ENCODE measurements at regions of chr1 and their contacts with region 1.

Region 1: GRCh38 chr1:231866392-231867331 is 240.1 kb downstream of the DISC1 start:
- DNase-seq: peak; percentile 39 to 66 (median 41)
- H3K4me3 ChIP-seq: no peak overlapping the region
- H3K4me3 Mint-ChIP-seq: peak overlapping the region in 2 of 7 donors; percentile 29 to 70
- H3K27ac ChIP-seq: no peak overlapping the region
- H3K27ac Mint-ChIP-seq: peak overlapping the region in 4 of 8 donors; percentile 33 to 52 (median 44)
- H3K4me1 ChIP-seq: peaks cover 21% of the 10 kb centered on the region
- H3K4me1 Mint-ChIP-seq: peaks cover 42 to 49% (median 44%) of the 10 kb centered on the region in 3 donors
- H3K27me3 ChIP-seq: no peaks in the 10 kb centered on the region
- H3K27me3 Mint-ChIP-seq: no peaks in the 10 kb centered on the region

Region 2: GRCh38 chr1:231778009-231778719 is 88.5 kb before region 1 on chr1:
- CTCF ChIA-PET with region 1: no interaction called
- POLR2A ChIA-PET with region 1: no interaction called
- DNase-seq: no peak
- H3K4me3 ChIP-seq: no peak overlapping the region
- H3K4me3 Mint-ChIP-seq: no peak overlapping the region
- H3K27ac ChIP-seq: no peak overlapping the region
- H3K27ac Mint-ChIP-seq: no peak overlapping the region
- H3K4me1 ChIP-seq: no peaks in the 10 kb centered on the region
- H3K4me1 Mint-ChIP-seq: no peaks in the 10 kb centered on the region
- H3K27me3 ChIP-seq: no peaks in the 10 kb centered on the region
- H3K27me3 Mint-ChIP-seq: no peaks in the 10 kb centered on the region

Region 3: DNA sequence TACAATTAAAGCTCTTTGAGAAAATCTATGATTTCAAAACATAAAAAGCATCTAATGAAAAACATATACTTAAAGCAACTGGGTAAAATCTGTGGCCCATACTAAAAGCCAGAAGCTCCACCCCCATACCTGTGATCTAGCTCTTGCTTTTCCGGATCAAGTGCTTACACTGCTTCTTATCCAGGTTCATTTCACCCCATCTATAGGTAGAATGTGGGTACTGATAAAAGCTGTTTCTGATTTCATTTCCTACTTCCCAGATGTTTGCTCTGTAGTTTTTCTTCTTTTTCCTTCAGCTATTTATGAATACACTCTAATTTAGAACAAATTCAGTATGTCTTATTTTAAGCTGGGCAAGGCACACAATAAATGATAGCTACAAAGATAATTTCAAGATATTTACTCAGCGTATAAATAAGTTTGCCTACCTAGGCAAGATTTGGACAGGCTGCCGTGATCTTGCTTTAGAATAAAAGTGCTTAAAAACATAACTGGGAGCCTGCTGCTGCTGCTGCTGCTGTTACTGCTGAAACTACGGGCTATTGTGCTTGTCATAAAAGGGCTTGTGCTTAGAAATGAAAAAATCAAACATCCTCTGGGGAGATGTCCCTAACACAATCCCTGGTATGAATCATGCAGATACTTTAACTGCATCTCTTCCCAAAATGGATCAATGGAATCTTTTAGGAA is 761.1 kb after region 1 on chr1:
- CTCF ChIA-PET with region 1: interaction called, 22 read pairs
- POLR2A ChIA-PET with region 1: no interaction called
- DNase-seq: peak in 2 of 5 donors; percentile 30 to 44
- H3K4me3 ChIP-seq: no peak overlapping the region
- H3K4me3 Mint-ChIP-seq: peak overlapping the region in 5 of 7 donors; percentile 53 to 95 (median 92)
- H3K27ac ChIP-seq: no peak overlapping the region
- H3K27ac Mint-ChIP-seq: peak overlapping the region in 5 of 8 donors; percentile 2 to 78 (median 13)
- H3K4me1 ChIP-seq: peaks cover 9% of the 10 kb centered on the region
- H3K4me1 Mint-ChIP-seq: peaks cover 26 to 45% (median 30%) of the 10 kb centered on the region in 3 donors
- H3K27me3 ChIP-seq: no peaks in the 10 kb centered on the region
- H3K27me3 Mint-ChIP-seq: peaks cover 16 to 35% of the 10 kb centered on the region in 2 donors